Kidney (tissue), 22 donors: ENCODE measurements at regions of chr3 and their contacts with region 1.

Region 1: GRCh38 chr3:158659454-158660237 is 12.8 kb downstream of the LXN start:
- DNase-seq: peak in 3 of 5 donors; percentile 41 to 82 (median 52)
- H3K4me3 ChIP-seq: no peak overlapping the region
- H3K27ac ChIP-seq: peak overlapping the region in 1 of 2 donors; percentile 28
- H3K4me1 ChIP-seq: no peaks in the 10 kb centered on the region
- H3K27me3 ChIP-seq: no peaks in the 10 kb centered on the region
- CTCF ChIP-seq: peak; percentile 57

Region 2: GRCh38 chr3:158570999-158571974 is 88.4 kb before region 1 on chr3 and contains the start of gene MLF1:
- intact Hi-C with region 1: no loop called
- DNase-seq: peak; percentile 98
- H3K4me3 ChIP-seq: peak within 1 kb of the TSS; percentile 79 to 97 (median 90)
- H3K27ac ChIP-seq: peak within 1 kb of the TSS in 1 of 2 donors; percentile 73
- H3K4me1 ChIP-seq: no peaks in the 10 kb centered on the region
- H3K27me3 ChIP-seq: no peaks in the 10 kb centered on the region
- CTCF ChIP-seq: no peak
- total RNA-seq, gene MLF1: 16.9 TPM

Region 3: GRCh38 chr3:158790901-158791589 is 131.4 kb after region 1 on chr3:
- intact Hi-C with region 1: loop called (anchors 10 kb)
- DNase-seq: peak in 3 of 5 donors; percentile 38 to 85 (median 75)
- H3K4me3 ChIP-seq: peak overlapping the region in 1 of 3 donors; percentile 32
- H3K27ac ChIP-seq: no peak overlapping the region
- H3K4me1 ChIP-seq: peaks cover 0 to 2% (median 0%) of the 10 kb centered on the region in 3 donors
- H3K27me3 ChIP-seq: no peaks in the 10 kb centered on the region
- CTCF ChIP-seq: peak; percentile 92